ENCODE measurements at regions of chr13 and their contacts with region 1.

Region 1: DNA sequence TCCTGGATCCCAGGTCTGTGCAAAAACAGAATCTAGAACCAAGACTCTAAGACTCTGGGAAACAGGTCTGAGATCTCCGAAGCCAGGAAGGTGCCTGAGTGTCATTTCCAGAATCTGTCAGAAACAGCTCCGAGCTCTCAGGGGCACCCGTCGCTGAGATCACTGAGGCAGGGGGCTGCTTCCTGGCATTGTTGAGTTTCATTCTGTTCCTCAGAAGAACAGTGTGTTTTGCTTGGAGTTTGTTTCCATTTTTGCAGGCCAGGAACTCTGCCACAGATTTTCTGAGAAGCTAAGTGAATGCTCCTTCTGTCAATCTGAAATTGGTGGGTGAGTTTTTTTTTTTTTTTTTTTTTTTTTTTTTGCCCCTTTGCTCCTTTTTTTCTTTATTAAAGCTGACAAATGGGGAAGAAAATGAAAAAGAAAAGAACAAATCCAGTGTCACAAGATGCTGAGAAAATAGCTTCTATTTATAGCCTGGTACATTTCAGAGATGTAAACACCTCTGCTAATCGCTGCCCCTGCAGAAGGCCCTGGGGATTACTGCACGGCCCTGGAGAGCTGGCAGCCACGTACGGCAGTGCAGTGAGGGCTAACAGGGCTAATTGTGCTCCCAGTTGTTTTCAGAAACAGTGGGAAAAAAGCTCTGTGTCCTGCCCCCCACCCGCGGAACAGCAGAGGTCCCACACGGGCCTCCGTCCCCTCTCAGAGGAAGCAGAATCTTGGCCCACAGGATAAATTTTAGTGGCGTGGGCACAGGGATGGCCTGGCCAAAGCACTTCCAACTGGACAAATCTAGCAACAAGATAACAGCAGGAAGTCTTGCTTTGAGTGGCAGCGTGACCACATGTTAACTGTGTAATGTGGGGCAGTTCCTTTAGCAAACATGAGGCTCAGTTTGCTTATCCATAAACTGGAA is 237.6 kb upstream of the IRS2 start:
- DNase-seq: no peak

Region 2: GRCh38 chr13:109869312-109870237 is 154.4 kb before region 1 on chr13:
- intact Hi-C with region 1: loop called (anchors 10 kb)
- DNase-seq: peak; percentile 87

Region 3: GRCh38 chr13:109904218-109904617 is 119.8 kb before region 1 on chr13:
- intact Hi-C with region 1: no loop called
- DNase-seq: no peak

Region 4: DNA sequence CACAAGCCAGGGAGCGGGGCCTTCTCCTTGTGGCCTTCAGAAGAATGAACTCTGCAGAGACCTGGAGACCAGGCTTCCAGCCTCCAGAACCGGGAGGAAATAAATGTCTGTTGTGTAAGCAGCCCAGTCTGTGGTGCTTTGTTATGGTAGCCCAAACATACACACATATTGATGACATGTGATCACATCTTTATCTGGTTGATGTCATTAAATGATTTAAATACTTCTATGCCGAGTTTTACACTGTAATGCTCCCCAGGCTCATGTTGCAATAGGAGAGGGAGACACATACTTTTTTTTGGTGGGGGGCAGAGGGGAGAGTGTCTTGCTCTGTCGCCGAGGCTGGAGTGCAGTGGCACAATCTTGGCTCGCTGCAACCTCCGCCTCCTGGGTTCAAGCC is 49.6 kb before region 1 on chr13:
- intact Hi-C with region 1: no loop called
- DNase-seq: no peak

Region 5: GRCh38 chr13:109989155-109989554 is 34.8 kb before region 1 on chr13:
- intact Hi-C with region 1: no loop called
- DNase-seq: no peak

Measured in cardiac septum (tissue), 1 donor.